Lower lobe of right lung (tissue), 2 donors: ENCODE measurements at regions of chr6 and their contacts with region 1.

Region 1: GRCh38 chr6:137866914-137867684 is at the start of gene TNFAIP3:
- DNase-seq: peak; percentile 96
- ATAC-seq: peak; percentile 92 to 97
- H3K4me3 ChIP-seq: peak within 1 kb of the TSS; percentile 92
- H3K27ac ChIP-seq: peak within 1 kb of the TSS; percentile 97
- H3K4me1 ChIP-seq: peaks cover 47% of the 10 kb centered on the region
- H3K27me3 ChIP-seq: no peaks in the 10 kb centered on the region
- CTCF ChIP-seq: peak; percentile 68
- total RNA-seq, gene TNFAIP3: 44.6 TPM

Region 2: GRCh38 chr6:137717074-137718073 is 149.7 kb before region 1 on chr6:
- intact Hi-C with region 1: loop called (anchors 10 kb)
- DNase-seq: no peak
- ATAC-seq: peak in 1 of 2 donors; percentile 44
- H3K4me3 ChIP-seq: no peak overlapping the region
- H3K27ac ChIP-seq: no peak overlapping the region
- H3K4me1 ChIP-seq: no peaks in the 10 kb centered on the region
- H3K27me3 ChIP-seq: no peaks in the 10 kb centered on the region
- CTCF ChIP-seq: no peak